Activated naive CD4-positive, alpha-beta T cell treated with anti-CD3 and anti-CD28 coated beads, Interleukin-2, amount 10 ng/mL, durations not matched to agents 7 days and 5 days (primary cell): ENCODE measurements at regions of chr17 and their contacts with region 1.

Region 1: DNA sequence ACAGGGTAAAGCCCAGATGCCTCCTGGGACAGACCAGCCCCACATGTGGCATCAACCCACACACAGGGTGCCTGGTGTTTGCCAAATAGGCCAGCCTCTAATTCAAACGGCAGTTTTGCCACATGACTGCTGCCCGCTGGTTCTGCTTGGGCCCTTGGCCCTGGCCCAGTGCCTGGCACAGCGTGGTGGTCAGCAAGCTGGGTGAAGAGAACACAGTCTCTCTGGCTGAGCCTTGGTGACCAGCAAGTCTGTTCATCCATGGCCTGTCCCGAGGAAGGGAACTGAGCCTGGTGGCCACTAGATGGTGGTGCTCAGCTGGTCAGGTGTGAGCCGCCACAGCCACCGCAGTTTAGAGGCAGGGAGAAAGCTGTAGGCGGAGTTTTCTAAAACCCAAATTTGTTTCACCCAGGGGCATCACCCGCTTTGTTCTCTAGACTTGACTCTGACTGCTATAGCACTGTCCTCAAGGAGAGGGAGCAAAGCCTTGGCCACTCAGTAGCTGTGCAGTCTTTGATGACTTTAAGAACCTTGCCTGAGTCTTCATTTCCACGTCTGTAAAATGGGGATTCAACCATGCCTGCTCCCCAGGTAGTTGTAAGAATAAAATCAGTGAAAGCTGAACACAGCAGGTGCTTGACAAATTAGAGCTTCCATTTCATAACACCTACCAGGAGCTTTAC is 4.7 kb upstream of the GFAP start:
- DNase-seq: peak; percentile 78
- H3K4me3 Mint-ChIP-seq: no peak overlapping the region
- H3K27ac Mint-ChIP-seq: no peak overlapping the region
- H3K4me1 Mint-ChIP-seq: no peaks in the 10 kb centered on the region
- H3K27me3 Mint-ChIP-seq: peaks cover 74% of the 10 kb centered on the region

Region 2: DNA sequence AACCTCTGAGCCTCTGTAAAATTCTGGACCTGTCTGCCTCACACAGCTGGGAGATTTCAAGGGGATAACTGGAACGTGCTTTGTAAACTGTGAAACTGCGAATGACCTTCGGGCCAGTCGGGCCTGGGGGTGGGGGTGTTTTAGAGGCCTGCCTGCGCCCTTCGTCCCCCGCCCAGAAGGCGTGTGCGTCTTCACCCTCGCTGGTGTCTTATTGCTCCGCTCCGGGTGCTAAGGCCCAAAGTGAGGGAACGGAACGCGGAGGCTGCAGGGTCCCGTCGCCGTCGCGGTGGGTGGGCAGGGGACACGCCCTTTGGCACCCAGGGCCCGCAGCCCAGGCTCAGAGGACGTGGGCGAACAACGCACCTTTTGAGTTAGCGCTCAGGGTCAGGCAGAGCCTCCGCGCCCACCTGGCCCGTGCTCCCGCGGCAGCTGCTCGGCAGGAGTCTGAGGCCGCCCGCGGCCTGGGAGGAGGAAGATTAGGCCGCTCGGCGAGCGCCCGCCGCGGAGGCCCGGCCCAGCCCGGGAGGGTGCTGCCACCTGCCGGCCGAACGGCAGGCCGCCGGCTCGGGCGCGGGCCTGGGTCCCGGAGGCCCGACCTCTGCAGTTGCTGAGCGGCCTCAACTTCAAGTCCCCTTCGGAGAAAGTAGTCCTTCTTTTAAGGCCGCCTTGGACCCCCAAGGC is 101.7 kb after region 1 on chr17:
- CTCF ChIA-PET with region 1: interaction called, 56 read pairs
- DNase-seq: peak; percentile 73
- H3K4me3 Mint-ChIP-seq: no peak overlapping the region
- H3K27ac Mint-ChIP-seq: no peak overlapping the region
- H3K4me1 Mint-ChIP-seq: peaks cover 21% of the 10 kb centered on the region
- H3K27me3 Mint-ChIP-seq: peaks cover 54% of the 10 kb centered on the region